Activated naive CD4-positive, alpha-beta T cell treated with anti-CD3 and anti-CD28 coated beads for 36 hours (primary cell): ENCODE measurements at regions of chr18 and their contacts with region 1.

Region 1: GRCh38 chr18:67515945-67516538 is 478 bp downstream of the DSEL start:
- DNase-seq: peak; percentile 77
- H3K4me3 Mint-ChIP-seq: peak overlapping the region; percentile 73
- H3K27ac Mint-ChIP-seq: no peak overlapping the region
- H3K4me1 Mint-ChIP-seq: peaks cover 21% of the 10 kb centered on the region
- H3K27me3 Mint-ChIP-seq: peaks cover 7% of the 10 kb centered on the region

Region 2: DNA sequence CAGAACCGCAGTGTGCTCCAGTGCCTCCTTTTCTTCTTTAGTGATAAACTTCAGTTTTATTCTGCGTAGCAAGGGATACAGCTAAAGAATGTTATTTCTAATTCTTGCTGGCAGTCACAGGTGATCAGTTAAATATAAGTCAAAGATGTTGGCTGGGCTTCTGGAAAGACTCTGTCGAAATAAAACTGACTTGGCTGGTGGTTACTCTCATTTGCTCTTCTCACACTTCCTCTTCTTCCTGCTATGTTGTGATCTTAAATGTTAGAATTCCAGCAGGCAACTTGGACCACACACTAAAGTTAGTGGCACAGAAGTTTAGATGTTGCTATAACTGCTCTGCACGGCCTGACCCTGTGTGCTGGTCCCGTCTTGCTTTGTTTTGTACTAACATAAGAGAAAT is 1190.8 kb before region 1 on chr18:
- CTCF ChIA-PET with region 1: no interaction called
- intact Hi-C with region 1: no loop called
- DNase-seq: no peak
- H3K4me3 Mint-ChIP-seq: no peak overlapping the region
- H3K27ac Mint-ChIP-seq: no peak overlapping the region
- H3K4me1 Mint-ChIP-seq: no peaks in the 10 kb centered on the region
- H3K27me3 Mint-ChIP-seq: no peaks in the 10 kb centered on the region

Region 3: GRCh38 chr18:67331857-67332256 is 184.2 kb before region 1 on chr18:
- CTCF ChIA-PET with region 1: no interaction called
- intact Hi-C with region 1: loop called (anchors 5 kb)
- DNase-seq: no peak
- H3K4me3 Mint-ChIP-seq: no peak overlapping the region
- H3K27ac Mint-ChIP-seq: no peak overlapping the region
- H3K4me1 Mint-ChIP-seq: no peaks in the 10 kb centered on the region
- H3K27me3 Mint-ChIP-seq: peaks cover 4% of the 10 kb centered on the region

Region 4: DNA sequence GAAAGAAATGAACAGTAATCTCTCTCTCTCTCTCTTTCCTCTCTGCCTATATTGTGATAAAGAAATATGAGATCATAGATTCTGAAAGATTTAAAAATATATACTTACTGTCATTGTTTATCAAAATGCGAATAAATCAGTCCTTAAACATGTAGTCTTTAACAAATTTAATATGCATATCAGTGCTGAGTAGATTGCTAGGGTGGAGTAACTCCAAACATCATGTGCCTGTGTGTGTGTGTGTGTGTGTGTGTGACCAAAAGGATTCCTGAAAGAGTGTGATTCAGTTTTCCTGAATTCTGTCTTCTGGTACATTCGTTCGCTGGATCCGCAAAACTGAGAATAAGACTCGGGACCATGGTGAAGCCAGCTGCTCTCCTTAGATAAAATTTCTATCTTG is 24.5 kb after region 1 on chr18:
- CTCF ChIA-PET with region 1: no interaction called
- intact Hi-C with region 1: no loop called
- DNase-seq: no peak
- H3K4me3 Mint-ChIP-seq: no peak overlapping the region
- H3K27ac Mint-ChIP-seq: no peak overlapping the region
- H3K4me1 Mint-ChIP-seq: no peaks in the 10 kb centered on the region
- H3K27me3 Mint-ChIP-seq: peaks cover 7% of the 10 kb centered on the region

Region 5: GRCh38 chr18:68623342-68623741 is 1107.3 kb after region 1 on chr18:
- CTCF ChIA-PET with region 1: no interaction called
- intact Hi-C with region 1: loop called (anchors 1 kb)
- DNase-seq: peak; percentile 51
- H3K4me3 Mint-ChIP-seq: no peak overlapping the region
- H3K27ac Mint-ChIP-seq: no peak overlapping the region
- H3K4me1 Mint-ChIP-seq: no peaks in the 10 kb centered on the region
- H3K27me3 Mint-ChIP-seq: peaks cover 5% of the 10 kb centered on the region

Region 6: GRCh38 chr18:68660354-68661183 is 1144.5 kb after region 1 on chr18:
- CTCF ChIA-PET with region 1: no interaction called
- intact Hi-C with region 1: loop called (anchors 1 kb)
- DNase-seq: no peak
- H3K4me3 Mint-ChIP-seq: no peak overlapping the region
- H3K27ac Mint-ChIP-seq: no peak overlapping the region
- H3K4me1 Mint-ChIP-seq: no peaks in the 10 kb centered on the region
- H3K27me3 Mint-ChIP-seq: no peaks in the 10 kb centered on the region

Region 7: DNA sequence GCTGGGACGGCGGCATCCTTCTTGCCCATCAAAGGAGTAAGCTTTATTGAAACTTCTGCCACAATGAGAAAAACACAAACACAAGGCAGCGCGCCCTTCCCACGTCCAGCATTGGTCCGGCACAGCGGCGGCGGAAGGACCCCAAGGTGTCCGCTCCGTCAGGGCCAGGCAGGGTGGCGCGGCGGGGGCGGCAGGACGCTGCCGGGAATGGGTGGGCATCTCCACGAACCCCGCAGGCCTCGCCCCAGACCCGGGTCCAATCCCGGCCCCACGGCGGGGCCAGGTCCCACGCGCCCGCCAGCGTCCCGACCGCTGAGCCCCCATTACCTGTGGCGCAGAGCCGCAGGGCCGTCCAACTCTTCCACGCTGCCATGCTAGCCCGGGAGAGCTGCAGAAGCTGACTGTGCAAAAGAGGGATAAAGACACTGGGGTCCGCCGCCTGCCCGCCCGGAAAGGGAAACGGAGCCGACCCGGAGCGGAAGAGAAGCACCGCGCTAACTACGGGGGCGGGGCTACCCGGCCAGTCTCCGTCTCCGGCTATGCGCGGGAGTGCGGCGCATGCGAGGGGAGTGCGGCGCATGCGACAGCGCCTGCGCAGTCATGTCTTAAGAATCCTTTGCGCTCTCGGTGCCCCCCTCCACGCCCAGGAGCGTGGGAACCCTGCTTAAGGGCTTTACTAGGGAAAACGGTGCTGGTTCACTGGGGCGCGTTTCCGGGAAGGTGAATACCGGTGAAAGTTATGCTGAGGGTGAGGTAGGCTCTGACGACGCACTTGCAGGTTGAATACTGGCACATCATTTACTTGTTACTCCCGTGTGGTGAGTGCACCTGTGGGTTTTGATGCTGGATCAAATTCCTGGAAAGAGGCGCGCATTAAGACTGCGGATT is 1198.8 kb after region 1 on chr18 and contains the start of gene TMX3:
- CTCF ChIA-PET with region 1: no interaction called
- intact Hi-C with region 1: loop called (anchors 1 kb)
- DNase-seq: peak; percentile 90
- H3K4me3 Mint-ChIP-seq: peak within 1 kb of the TSS; percentile 96
- H3K27ac Mint-ChIP-seq: peak within 1 kb of the TSS; percentile 92
- H3K4me1 Mint-ChIP-seq: peaks cover 33% of the 10 kb centered on the region
- H3K27me3 Mint-ChIP-seq: no peaks in the 10 kb centered on the region
- total RNA-seq, gene TMX3: 35.5 to 41.3 TPM

Region 8: GRCh38 chr18:68735483-68736343 is 1219.7 kb after region 1 on chr18:
- CTCF ChIA-PET with region 1: no interaction called
- intact Hi-C with region 1: loop called (anchors 1 kb)
- DNase-seq: peak; percentile 11
- H3K4me3 Mint-ChIP-seq: no peak overlapping the region
- H3K27ac Mint-ChIP-seq: no peak overlapping the region
- H3K4me1 Mint-ChIP-seq: no peaks in the 10 kb centered on the region
- H3K27me3 Mint-ChIP-seq: no peaks in the 10 kb centered on the region